ENCODE measurements at regions of chr6 and their contacts with region 1.

Region 1: GRCh38 chr6:133923938-133924593 is 29.0 kb upstream of the TBPL1 start:
- DNase-seq: no peak
- ATAC-seq: peak; percentile 91 to 94
- H3K4me3 ChIP-seq: no peak overlapping the region
- H3K27ac ChIP-seq: no peak overlapping the region
- H3K4me1 ChIP-seq: no peaks in the 10 kb centered on the region
- H3K27me3 ChIP-seq: peaks cover 5% of the 10 kb centered on the region
- CTCF ChIP-seq: peak; percentile 85

Region 2: GRCh38 chr6:133966654-133967329 is 42.7 kb after region 1 on chr6:
- intact Hi-C with region 1: no loop called
- DNase-seq: no peak
- ATAC-seq: no peak
- H3K4me3 ChIP-seq: no peak overlapping the region
- H3K27ac ChIP-seq: no peak overlapping the region
- H3K4me1 ChIP-seq: peaks cover 9% of the 10 kb centered on the region
- H3K27me3 ChIP-seq: no peaks in the 10 kb centered on the region
- CTCF ChIP-seq: no peak

Region 3: GRCh38 chr6:134097114-134097707 is 173.1 kb after region 1 on chr6:
- intact Hi-C with region 1: loop called (anchors 10 kb)
- DNase-seq: no peak
- ATAC-seq: peak; percentile 45 to 69
- H3K4me3 ChIP-seq: no peak overlapping the region
- H3K27ac ChIP-seq: no peak overlapping the region
- H3K4me1 ChIP-seq: no peaks in the 10 kb centered on the region
- H3K27me3 ChIP-seq: no peaks in the 10 kb centered on the region
- CTCF ChIP-seq: peak; percentile 69